ENCODE measurements at regions of chr7 and their contacts with region 1.

Region 1: GRCh38 chr7:103396471-103396870 is 49.0 kb downstream of the PSMC2 start:
- ATAC-seq: no peak
- H3K4me3 ChIP-seq: no peak overlapping the region
- H3K27ac ChIP-seq: no peak overlapping the region
- H3K4me1 ChIP-seq: no peaks in the 10 kb centered on the region

Region 2: GRCh38 chr7:102814025-102814471 is 582.4 kb before region 1 on chr7:
- in situ Hi-C with region 1: no loop called
- ATAC-seq: no peak
- H3K4me3 ChIP-seq: no peak overlapping the region
- H3K27ac ChIP-seq: no peak overlapping the region
- H3K4me1 ChIP-seq: no peaks in the 10 kb centered on the region

Region 3: DNA sequence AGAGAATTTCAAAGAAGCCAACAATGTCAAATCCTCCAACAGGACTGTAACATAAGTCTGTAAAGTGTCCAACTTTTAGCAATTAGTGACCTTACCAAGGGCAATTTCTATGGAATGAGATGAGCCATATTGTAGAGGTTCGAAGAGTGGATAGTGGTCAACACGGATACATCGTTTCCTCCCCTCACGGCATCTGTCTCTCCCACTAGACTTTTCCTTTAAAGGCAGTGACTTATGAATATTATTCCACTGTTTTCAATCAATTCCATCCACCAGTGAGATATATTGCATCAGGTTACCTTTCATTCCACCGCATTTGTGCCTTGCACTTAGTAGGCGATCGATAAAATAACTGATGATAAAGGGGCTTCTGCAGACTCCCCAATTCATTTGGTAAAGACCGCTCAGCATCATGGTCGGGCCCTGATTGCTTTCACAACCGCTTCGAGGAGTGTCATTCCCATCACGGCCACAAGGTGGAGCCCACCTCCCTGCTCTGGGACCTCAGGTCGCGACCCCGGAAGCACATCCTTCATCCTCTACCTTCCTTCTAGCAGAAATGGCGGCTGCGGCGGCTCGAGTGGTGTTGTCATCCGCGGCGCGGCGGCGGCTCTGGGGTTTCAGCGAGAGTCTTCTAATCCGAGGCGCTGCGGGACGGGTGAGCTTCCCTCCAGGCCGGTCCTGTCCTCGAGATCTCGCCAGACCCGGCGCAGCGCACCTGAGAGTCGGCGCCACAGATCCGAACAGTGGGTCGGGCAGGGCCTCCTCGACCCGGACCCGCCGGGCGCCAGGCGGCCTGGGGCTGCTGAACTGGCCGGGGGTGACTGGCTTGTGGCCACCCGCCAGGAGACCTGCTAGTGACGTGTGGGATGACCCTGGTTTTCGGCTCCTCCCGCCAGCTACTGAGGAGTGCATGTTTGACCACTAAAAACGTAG is 99.3 kb before region 1 on chr7 and contains the start of gene PMPCB:
- in situ Hi-C with region 1: loop called in 1 of 9 experiments (anchors 10 kb)
- ATAC-seq: peak; percentile 94 to 97 (median 96)
- H3K4me3 ChIP-seq: peak within 1 kb of the TSS; percentile 61 to 90 (median 73)
- H3K27ac ChIP-seq: peak within 1 kb of the TSS; percentile 81 to 93
- H3K4me1 ChIP-seq: peaks cover 15 to 16% of the 10 kb centered on the region in 2 donors
- total RNA-seq, gene PMPCB: 50.0 to 87.0 (median 64.3) TPM

Region 4: GRCh38 chr7:103833401-103833800 is 436.9 kb after region 1 on chr7:
- in situ Hi-C with region 1: no loop called
- ATAC-seq: no peak
- H3K4me3 ChIP-seq: no peak overlapping the region
- H3K27ac ChIP-seq: no peak overlapping the region
- H3K4me1 ChIP-seq: no peaks in the 10 kb centered on the region

Region 5: GRCh38 chr7:103851357-103851756 is 454.9 kb after region 1 on chr7:
- in situ Hi-C with region 1: no loop called
- ATAC-seq: no peak
- H3K4me3 ChIP-seq: no peak overlapping the region
- H3K27ac ChIP-seq: no peak overlapping the region
- H3K4me1 ChIP-seq: no peaks in the 10 kb centered on the region